ENCODE measurements at regions of chr16 and their contacts with region 1.

Region 1: GRCh38 chr16:56851671-56852400 is 13.2 kb upstream of the SLC12A3 start:
- DNase-seq: peak in 1 of 5 donors; percentile 35
- H3K4me3 ChIP-seq: no peak overlapping the region
- H3K27ac ChIP-seq: no peak overlapping the region
- H3K4me1 ChIP-seq: peaks cover 16% of the 10 kb centered on the region
- H3K27me3 ChIP-seq: no peaks in the 10 kb centered on the region
- CTCF ChIP-seq: no peak
- EP300 ChIP-seq: no peak
- POLR2A ChIP-seq: no peak

Region 2: DNA sequence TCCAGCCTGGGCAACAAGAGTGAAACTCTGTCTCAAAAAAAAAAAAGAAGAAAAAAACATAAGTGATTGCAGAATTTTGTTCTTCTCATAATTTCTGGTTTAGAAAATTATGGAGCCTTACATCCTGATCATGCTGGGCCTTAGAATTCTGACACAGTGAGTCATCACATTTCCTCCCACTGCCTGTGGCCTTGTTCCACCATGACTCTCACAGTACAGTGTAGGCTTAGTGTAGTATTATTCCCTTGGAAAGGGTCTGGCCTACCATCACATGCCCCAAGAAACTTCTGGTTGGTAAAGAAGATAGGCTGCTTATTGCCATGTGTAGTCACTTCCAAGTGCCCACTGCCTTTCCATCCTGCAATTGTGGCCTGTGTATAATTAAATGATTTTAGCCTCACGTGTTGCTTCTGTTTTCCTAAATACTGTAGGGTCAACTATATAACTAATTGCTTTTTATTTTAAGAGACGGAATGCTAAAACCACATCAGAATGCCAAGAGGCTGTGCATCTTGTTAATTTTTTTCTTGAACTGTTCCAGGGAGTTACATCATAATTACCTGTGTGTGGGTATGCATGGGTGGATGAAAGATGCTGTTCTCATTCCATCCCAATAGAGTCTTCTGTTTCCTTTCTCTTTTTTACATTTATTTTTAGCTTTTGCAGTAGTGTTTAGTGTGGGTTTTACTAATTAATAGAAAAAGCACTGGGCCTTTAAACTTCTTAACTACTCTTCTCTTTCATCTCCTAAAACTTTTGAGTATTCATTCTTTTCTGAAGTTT is 374.5 kb before region 1 on chr16:
- intact Hi-C with region 1: no loop called
- DNase-seq: no peak
- H3K4me3 ChIP-seq: no peak overlapping the region
- H3K27ac ChIP-seq: no peak overlapping the region
- H3K4me1 ChIP-seq: no peaks in the 10 kb centered on the region
- H3K27me3 ChIP-seq: no peaks in the 10 kb centered on the region
- CTCF ChIP-seq: no peak
- EP300 ChIP-seq: no peak
- POLR2A ChIP-seq: no peak

Region 3: GRCh38 chr16:56944954-56945839 is 93.4 kb after region 1 on chr16:
- intact Hi-C with region 1: loop called in 1 of 4 experiments (anchors 10 kb)
- DNase-seq: peak; percentile 39 to 78 (median 60)
- H3K4me3 ChIP-seq: no peak overlapping the region
- H3K27ac ChIP-seq: peak overlapping the region in 1 of 2 donors; percentile 43
- H3K4me1 ChIP-seq: peaks cover 8% of the 10 kb centered on the region
- H3K27me3 ChIP-seq: no peaks in the 10 kb centered on the region
- CTCF ChIP-seq: no peak
- EP300 ChIP-seq: no peak
- POLR2A ChIP-seq: no peak

Region 4: DNA sequence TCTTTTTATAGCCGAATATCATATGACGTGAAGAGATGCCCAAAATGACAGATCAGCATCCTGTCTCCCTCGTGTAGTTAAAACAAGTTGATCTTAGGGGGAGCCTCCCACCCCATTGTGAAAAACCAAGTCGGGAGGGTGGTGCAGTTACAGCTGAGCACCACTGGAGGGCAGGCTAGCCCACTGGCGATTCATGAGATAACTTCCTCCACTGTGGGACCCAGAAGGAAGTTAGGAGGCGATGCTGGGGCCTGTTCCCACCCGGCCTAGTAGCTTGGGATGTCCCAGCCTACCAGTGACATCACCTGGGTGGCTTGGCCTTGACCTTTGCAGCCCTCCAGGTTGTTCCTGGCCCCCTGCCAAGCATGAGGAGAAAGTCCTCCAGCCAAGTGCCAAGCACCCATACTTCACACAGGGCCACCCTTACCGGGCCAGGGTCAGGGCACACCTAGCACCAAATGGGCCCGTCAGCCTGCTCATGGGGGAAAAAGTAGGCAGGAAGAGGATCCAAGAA is 232.5 kb after region 1 on chr16:
- intact Hi-C with region 1: no loop called
- DNase-seq: peak; percentile 49 to 77 (median 72)
- H3K4me3 ChIP-seq: no peak overlapping the region
- H3K27ac ChIP-seq: no peak overlapping the region
- H3K4me1 ChIP-seq: peaks cover 3% of the 10 kb centered on the region
- H3K27me3 ChIP-seq: no peaks in the 10 kb centered on the region
- CTCF ChIP-seq: peak; percentile 85 to 89 (median 87)
- EP300 ChIP-seq: no peak
- POLR2A ChIP-seq: no peak